Transverse colon (tissue), 4 donors: ENCODE measurements at regions of chrX and their contacts with region 1.

Region 1: GRCh38 chrX:72280321-72280845 is 3.3 kb upstream of the RPS4X start:
- DNase-seq: no peak
- H3K4me3 ChIP-seq: no peak overlapping the region
- H3K27ac ChIP-seq: no peak overlapping the region
- H3K4me1 ChIP-seq: peaks cover 0 to 11% (median 8%) of the 10 kb centered on the region in 4 donors
- H3K27me3 ChIP-seq: no peaks in the 10 kb centered on the region
- CTCF ChIP-seq: no peak
- EP300 ChIP-seq: no peak
- POLR2A ChIP-seq: no peak

Region 2: GRCh38 chrX:72269671-72270251 is 10.6 kb before region 1 on chrX:
- in situ Hi-C with region 1: no loop called
- intact Hi-C with region 1: loop called (anchors 2 kb)
- DNase-seq: no peak
- H3K4me3 ChIP-seq: no peak overlapping the region
- H3K27ac ChIP-seq: peak overlapping the region in 1 of 4 donors; percentile 19
- H3K4me1 ChIP-seq: peaks cover 0 to 8% (median 2%) of the 10 kb centered on the region in 4 donors
- H3K27me3 ChIP-seq: no peaks in the 10 kb centered on the region
- CTCF ChIP-seq: no peak
- EP300 ChIP-seq: no peak
- POLR2A ChIP-seq: no peak